K562 (cell line): ENCODE measurements at regions of chr1 and their contacts with region 1.

Region 1: GRCh38 chr1:61851849-61852669 is 109.8 kb downstream of the PATJ start:
- DNase-seq: peak; percentile 22 to 73 (median 32)
- ATAC-seq: peak; percentile 85
- H3K4me3 ChIP-seq: no peak overlapping the region
- H3K27ac ChIP-seq: no peak overlapping the region
- H3K4me1 ChIP-seq: no peaks in the 10 kb centered on the region
- H3K27me3 ChIP-seq: peaks cover 0 to 2% of the 10 kb centered on the region in 2 experiments; a peak in 2 of 5 replicates
- CTCF ChIP-seq: peak; percentile 49 to 85 (median 54); a peak in 5 of 6 replicates
- EP300 ChIP-seq: no peak
- POLR2A ChIP-seq: no peak
- RAD21 ChIP-seq: peak; percentile 75 to 86

Region 2: DNA sequence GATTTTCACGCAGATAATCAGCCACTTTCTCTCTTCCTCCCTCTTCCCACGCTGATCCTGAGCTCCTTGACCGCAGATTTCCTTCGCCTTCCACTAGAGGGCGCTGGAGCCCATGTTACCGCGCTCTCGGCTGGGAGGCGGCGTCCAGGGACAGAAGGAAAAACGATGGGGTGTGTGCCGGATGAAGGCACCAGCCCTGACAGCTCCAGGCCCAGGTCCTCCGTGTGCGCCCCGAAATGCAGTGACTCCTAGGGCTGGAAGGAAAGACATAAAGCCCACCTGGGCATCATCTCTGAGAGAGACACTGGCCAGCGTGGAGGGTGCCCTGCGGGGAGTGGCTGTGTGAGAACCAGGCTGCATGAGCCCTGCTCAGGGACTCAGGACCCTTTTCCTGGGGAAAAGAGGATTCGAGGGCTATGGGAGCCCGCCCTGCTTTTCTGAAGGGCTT is 1880.6 kb before region 1 on chr1:
- CTCF ChIA-PET with region 1: interaction called, 4 read pairs
- POLR2A ChIA-PET with region 1: no interaction called
- in situ Hi-C with region 1: loop called (anchors 10 kb)
- intact Hi-C with region 1: loop called (anchors 2 kb)
- DNase-seq: peak; percentile 72 to 79 (median 76)
- ATAC-seq: peak; percentile 89
- H3K4me3 ChIP-seq: no peak overlapping the region
- H3K27ac ChIP-seq: no peak overlapping the region
- H3K4me1 ChIP-seq: peaks cover 3 to 11% of the 10 kb centered on the region in 2 experiments; a peak in 3 of 5 replicates
- H3K27me3 ChIP-seq: peaks cover 7 to 10% of the 10 kb centered on the region in 2 experiments; a peak in 2 of 5 replicates
- CTCF ChIP-seq: peak; percentile 72 to 88 (median 84)
- EP300 ChIP-seq: no peak
- POLR2A ChIP-seq: no peak
- RAD21 ChIP-seq: peak; percentile 63 to 81

Region 3: DNA sequence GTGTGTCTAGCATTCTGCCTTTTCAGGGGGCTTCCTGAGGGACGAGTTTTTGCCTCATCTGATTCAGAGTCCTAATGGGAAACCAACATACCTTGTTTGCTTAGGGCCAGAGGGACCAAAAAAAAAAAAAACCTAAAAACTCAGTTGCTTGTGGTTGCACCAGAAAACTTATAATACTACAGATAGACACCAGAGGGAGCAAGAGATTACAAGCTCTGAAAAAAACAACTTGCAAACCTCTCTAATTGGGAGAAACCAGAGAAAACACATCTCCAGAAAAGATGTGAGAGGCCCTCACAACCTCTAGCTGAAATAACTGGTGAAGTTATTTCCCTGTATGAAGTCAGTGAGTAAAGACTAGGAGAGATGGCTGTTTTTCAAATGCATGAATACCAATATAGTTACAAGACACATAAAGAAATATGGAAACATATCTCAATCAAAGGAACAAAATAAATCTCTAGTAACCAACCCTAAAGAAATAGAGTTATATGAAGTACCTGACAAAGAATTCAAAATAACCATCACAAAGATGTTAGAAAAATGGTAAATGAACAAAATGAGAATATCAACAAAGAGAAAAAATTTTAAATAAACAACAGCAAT is 1003.4 kb before region 1 on chr1:
- CTCF ChIA-PET with region 1: interaction called, 6 read pairs
- POLR2A ChIA-PET with region 1: no interaction called
- in situ Hi-C with region 1: no loop called
- intact Hi-C with region 1: loop called (anchors 5 kb)
- DNase-seq: peak in 2 of 4 experiments; percentile 19 to 53
- ATAC-seq: peak; percentile 90
- H3K4me3 ChIP-seq: no peak overlapping the region
- H3K27ac ChIP-seq: no peak overlapping the region
- H3K4me1 ChIP-seq: no peaks in the 10 kb centered on the region
- H3K27me3 ChIP-seq: no peaks in the 10 kb centered on the region
- CTCF ChIP-seq: peak; percentile 43 to 67 (median 54); a peak in 5 of 6 replicates
- EP300 ChIP-seq: peak; percentile 70
- POLR2A ChIP-seq: no peak
- RAD21 ChIP-seq: peak; percentile 67 to 80

Region 4: DNA sequence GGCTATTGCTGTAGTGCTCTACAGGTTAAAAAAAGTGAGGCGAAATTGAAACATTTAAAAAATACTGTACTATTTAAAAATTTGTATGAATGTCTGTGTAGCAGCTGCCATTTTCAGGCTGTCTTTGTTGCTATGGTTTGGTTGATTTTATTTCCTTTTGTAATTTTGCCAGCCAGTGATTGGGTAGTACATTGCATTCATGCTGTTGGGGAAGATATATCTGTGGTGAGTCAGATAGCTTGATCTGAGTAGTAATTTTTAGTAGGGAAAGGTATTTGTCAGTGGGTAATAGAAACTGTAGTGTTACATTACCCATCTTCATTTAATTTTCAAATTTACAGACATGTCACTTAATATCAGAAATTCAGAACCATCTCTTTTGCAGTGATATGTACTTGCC is 754.7 kb before region 1 on chr1:
- CTCF ChIA-PET with region 1: no interaction called
- POLR2A ChIA-PET with region 1: no interaction called
- in situ Hi-C with region 1: no loop called
- intact Hi-C with region 1: loop called (anchors 10 kb)
- DNase-seq: no peak
- ATAC-seq: 0 out of 3 replicates have a peak, but pooled peaks have one; percentile 7
- H3K4me3 ChIP-seq: no peak overlapping the region
- H3K27ac ChIP-seq: no peak overlapping the region
- H3K4me1 ChIP-seq: peaks cover 0 to 4% of the 10 kb centered on the region in 2 experiments; a peak in 1 of 5 replicates
- H3K27me3 ChIP-seq: no peaks in the 10 kb centered on the region
- CTCF ChIP-seq: no peak
- EP300 ChIP-seq: no peak
- POLR2A ChIP-seq: no peak
- RAD21 ChIP-seq: no peak

Region 5: DNA sequence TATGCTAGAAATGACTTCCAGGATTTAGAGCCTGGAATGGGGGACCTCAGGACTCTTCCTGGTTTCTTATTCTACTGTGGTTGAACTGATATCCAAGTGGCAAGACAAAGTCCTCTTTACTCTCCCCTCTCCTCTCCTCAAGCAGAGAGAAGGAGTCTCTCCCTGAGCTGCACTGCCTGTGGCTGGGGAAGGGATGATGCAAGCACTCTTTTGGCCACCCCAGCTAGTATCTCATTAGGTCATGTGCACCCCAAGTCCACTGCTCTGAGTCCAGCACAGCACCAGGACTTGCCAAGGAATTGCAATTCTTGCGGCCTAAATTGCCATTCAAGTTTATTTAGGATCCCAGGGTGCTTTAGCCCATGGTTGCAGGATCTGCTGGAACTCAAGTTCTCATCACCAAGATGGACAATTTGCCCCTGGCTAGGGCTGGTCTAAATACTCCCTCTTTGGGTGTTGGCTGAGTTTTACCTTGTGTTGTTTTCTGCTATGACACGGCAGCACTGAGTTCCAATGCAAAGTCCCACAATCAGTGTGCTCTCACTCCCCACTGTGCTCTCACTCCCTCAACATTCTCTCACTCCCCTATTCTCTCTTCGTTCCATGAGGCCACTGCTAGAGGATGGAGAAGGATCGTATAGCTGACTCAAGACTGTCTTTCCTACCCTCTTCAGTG is 299.3 kb before region 1 on chr1:
- CTCF ChIA-PET with region 1: no interaction called
- POLR2A ChIA-PET with region 1: no interaction called
- in situ Hi-C with region 1: no loop called
- intact Hi-C with region 1: loop called (anchors 2 kb)
- DNase-seq: no peak
- ATAC-seq: no peak
- H3K4me3 ChIP-seq: no peak overlapping the region
- H3K27ac ChIP-seq: no peak overlapping the region
- H3K4me1 ChIP-seq: no peaks in the 10 kb centered on the region
- H3K27me3 ChIP-seq: no peaks in the 10 kb centered on the region
- CTCF ChIP-seq: no peak
- EP300 ChIP-seq: no peak
- POLR2A ChIP-seq: no peak
- RAD21 ChIP-seq: no peak

Region 6: GRCh38 chr1:61770131-61770530 is 81.9 kb before region 1 on chr1:
- CTCF ChIA-PET with region 1: no interaction called
- POLR2A ChIA-PET with region 1: no interaction called
- in situ Hi-C with region 1: no loop called
- intact Hi-C with region 1: no loop called
- DNase-seq: no peak
- ATAC-seq: no peak
- H3K4me3 ChIP-seq: no peak overlapping the region
- H3K27ac ChIP-seq: no peak overlapping the region
- H3K4me1 ChIP-seq: no peaks in the 10 kb centered on the region; a peak in 1 of 5 replicates
- H3K27me3 ChIP-seq: peaks cover 6% of the 10 kb centered on the region in 2 experiments; a peak in 3 of 5 replicates
- CTCF ChIP-seq: no peak
- EP300 ChIP-seq: no peak
- POLR2A ChIP-seq: no peak
- RAD21 ChIP-seq: no peak

Region 7: DNA sequence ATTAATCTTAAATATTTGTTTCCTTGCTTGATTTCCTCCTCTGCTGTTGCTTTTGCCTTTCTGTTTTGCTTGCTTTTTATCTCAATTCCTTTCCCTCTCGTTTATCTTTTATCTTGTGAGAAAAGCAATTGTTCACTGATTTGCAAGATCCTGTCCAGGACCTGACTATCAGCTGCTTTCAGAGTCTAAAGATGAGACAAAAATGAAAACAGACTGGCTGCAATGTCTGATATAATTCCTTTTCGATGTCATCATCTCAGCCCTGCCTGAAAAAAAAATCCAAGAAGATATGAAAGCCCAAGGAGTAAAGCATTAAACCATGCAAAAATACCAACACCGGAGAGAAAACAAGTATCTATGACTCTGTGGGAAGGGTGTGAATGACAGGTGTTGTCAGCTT is 115.7 kb after region 1 on chr1:
- CTCF ChIA-PET with region 1: no interaction called
- POLR2A ChIA-PET with region 1: no interaction called
- in situ Hi-C with region 1: no loop called
- intact Hi-C with region 1: no loop called
- DNase-seq: no peak
- ATAC-seq: no peak
- H3K4me3 ChIP-seq: no peak overlapping the region
- H3K27ac ChIP-seq: no peak overlapping the region
- H3K4me1 ChIP-seq: no peaks in the 10 kb centered on the region
- H3K27me3 ChIP-seq: no peaks in the 10 kb centered on the region
- CTCF ChIP-seq: no peak
- EP300 ChIP-seq: no peak
- POLR2A ChIP-seq: no peak
- RAD21 ChIP-seq: no peak